ENCODE measurements at regions of chr14 and their contacts with region 1.

Region 1: GRCh38 chr14:32576088-32576795 is 247.1 kb downstream of the AKAP6 start:
- DNase-seq: peak; percentile 45
- ATAC-seq: peak; percentile 64
- H3K4me3 Mint-ChIP-seq: no peak overlapping the region
- H3K27ac Mint-ChIP-seq: no peak overlapping the region
- H3K4me1 Mint-ChIP-seq: no peaks in the 10 kb centered on the region
- H3K27me3 Mint-ChIP-seq: peaks cover 2% of the 10 kb centered on the region
- CTCF ChIP-seq: peak; percentile 93

Region 2: DNA sequence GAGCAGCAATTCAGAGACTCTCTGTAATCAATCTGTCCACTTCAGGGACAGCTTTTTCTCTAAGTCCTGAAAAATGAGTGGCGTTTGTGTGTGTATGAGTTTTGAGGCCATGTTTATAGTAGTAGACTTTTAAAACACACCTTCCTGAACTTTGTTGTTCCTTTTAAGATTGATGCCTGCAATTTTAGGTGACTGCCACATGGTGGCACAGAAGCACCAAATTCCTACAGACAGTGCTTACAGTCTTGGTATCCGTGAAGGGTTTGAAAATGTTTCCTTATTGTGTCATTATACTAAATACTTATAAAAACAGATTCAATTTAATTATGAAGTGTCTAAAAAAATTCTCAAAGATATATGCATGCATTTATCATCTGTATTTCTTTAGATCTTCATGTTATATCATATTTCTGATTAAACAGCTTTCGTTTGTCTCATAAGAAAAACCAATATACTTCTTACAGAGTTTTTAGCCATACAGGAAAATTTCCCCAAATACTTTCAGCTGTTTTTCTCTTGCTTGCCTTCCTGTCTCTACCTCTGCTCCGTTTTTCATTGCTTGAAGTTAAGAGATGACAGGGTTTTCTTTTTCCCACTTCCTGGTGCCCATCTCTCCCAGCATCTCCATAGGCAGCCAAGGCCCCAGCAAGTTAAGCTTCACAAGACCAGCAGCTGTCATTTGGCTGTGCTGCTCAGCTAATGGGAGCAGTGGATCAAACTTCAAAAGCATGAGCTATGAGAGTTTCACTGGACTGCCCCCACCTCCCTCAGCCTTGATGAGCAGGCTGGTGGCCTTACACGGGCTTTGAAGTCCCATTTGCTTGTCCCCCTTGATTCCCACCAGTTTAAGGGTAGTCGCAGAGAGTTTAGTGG is 12.4 kb after region 1 on chr14:
- CTCF ChIA-PET with region 1: interaction called, 13 read pairs
- POLR2A ChIA-PET with region 1: no interaction called
- intact Hi-C with region 1: no loop called
- DNase-seq: no peak
- ATAC-seq: no peak
- H3K4me3 Mint-ChIP-seq: no peak overlapping the region
- H3K27ac Mint-ChIP-seq: no peak overlapping the region
- H3K4me1 Mint-ChIP-seq: no peaks in the 10 kb centered on the region
- H3K27me3 Mint-ChIP-seq: no peaks in the 10 kb centered on the region
- CTCF ChIP-seq: peak; percentile 64

Region 3: DNA sequence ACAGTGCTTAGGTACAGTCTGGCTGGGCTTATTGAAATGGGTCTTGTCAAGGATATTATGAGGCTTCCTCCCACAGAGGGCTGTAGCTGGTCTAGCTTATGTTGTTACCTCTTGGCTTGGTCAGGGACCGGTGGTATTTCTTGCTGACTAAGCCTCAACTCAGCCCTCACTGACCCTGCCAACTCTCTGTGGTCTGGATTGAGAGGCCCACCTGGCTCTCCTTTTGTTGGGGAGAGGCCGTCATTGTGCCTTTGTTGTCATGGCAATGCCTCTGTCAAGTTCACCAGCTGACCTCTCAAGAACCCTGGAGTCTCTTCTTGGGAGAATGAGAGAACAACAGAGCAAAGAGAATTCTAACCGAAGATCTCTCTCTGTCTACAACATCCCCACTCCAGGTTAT is 116.9 kb after region 1 on chr14:
- CTCF ChIA-PET with region 1: no interaction called
- POLR2A ChIA-PET with region 1: no interaction called
- intact Hi-C with region 1: no loop called
- DNase-seq: no peak
- ATAC-seq: no peak
- H3K4me3 Mint-ChIP-seq: no peak overlapping the region
- H3K27ac Mint-ChIP-seq: no peak overlapping the region
- H3K4me1 Mint-ChIP-seq: no peaks in the 10 kb centered on the region
- H3K27me3 Mint-ChIP-seq: no peaks in the 10 kb centered on the region
- CTCF ChIP-seq: no peak

Region 4: GRCh38 chr14:32724867-32725471 is 148.7 kb after region 1 on chr14:
- CTCF ChIA-PET with region 1: no interaction called
- POLR2A ChIA-PET with region 1: no interaction called
- intact Hi-C with region 1: no loop called
- DNase-seq: no peak
- ATAC-seq: no peak
- H3K4me3 Mint-ChIP-seq: no peak overlapping the region
- H3K27ac Mint-ChIP-seq: no peak overlapping the region
- H3K4me1 Mint-ChIP-seq: no peaks in the 10 kb centered on the region
- H3K27me3 Mint-ChIP-seq: no peaks in the 10 kb centered on the region
- CTCF ChIP-seq: no peak

Region 5: DNA sequence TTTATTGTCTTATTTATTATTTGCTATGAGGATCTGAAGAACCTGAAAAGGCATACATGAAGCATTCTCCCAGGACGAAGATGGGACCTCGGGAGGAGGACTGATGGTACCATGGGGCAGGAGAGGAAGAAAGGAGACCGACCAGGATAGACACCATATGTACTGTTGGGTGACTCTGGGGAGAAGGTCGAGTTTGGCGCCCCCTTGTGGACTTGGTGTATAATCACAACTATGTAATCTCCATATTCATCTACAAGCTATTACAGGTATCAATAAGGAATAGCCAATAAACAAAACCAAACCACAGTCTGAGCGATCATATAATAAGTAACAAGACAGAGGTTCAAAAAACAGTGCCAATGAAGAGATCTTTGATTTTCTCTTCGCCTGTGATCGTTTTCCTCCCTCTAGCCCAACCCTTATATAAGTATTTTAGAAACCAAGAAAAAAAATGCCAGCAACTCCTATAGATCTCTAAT is 1746.7 kb after region 1 on chr14:
- CTCF ChIA-PET with region 1: interaction called, 4 read pairs
- POLR2A ChIA-PET with region 1: no interaction called
- intact Hi-C with region 1: loop called (anchors 10 kb)
- DNase-seq: peak; percentile 68
- ATAC-seq: peak; percentile 90
- H3K4me3 Mint-ChIP-seq: no peak overlapping the region
- H3K27ac Mint-ChIP-seq: no peak overlapping the region
- H3K4me1 Mint-ChIP-seq: no peaks in the 10 kb centered on the region
- H3K27me3 Mint-ChIP-seq: peaks cover 1% of the 10 kb centered on the region
- CTCF ChIP-seq: peak; percentile 78

Measured in activated CD8-positive, alpha-beta T cell treated with anti-CD3 and anti-CD28 coated beads for 36 hours (primary cell).